HCT116 (cell line): ENCODE measurements at regions of chr13 and their contacts with region 1.

Region 1: DNA sequence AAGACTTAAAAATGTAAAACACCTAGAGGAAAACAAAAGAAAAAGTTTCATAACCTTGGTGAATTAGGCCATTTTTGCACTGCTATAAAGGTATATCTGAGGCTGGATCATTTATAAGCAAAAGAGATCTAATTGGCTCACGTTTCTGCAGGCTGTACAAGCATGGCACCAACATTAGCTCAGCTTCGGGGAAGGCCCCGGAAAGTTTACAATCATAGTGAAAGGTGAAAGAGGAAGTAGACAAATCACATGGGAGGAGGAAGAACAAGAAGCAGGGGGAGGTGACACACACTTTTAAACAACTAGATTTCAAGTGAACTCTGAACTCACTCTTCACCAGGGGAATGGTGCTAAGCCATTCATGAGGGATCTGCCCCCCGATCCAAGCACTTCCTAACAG is 1358.5 kb upstream of the PCDH9 start:
- DNase-seq: no peak
- ATAC-seq: no peak
- H3K4me3 ChIP-seq: no peak overlapping the region
- H3K27ac ChIP-seq: no peak overlapping the region
- H3K4me1 ChIP-seq: no peaks in the 10 kb centered on the region
- H3K27me3 ChIP-seq: no peaks in the 10 kb centered on the region
- CTCF ChIP-seq: no peak
- POLR2A ChIP-seq: no peak
- RAD21 ChIP-seq: no peak

Region 2: DNA sequence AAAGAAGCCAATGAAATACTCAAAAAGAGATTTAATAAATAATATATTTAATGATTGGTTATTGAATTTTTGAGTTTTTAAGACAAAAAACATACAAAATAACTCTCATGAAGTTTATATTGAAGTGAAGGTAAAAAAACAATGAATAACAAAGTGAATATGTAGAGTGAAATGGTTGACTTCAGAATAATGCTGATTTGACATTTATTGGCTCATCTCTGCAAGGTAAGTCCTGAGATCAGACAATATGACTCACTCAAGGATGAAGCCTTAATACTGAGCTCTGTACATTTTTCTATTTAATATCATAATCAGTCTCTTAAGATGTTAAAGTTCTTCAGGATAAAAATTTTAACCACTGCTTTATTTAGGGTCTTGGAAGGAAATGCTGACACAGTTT is 40.4 kb after region 1 on chr13:
- CTCF ChIA-PET with region 1: no interaction called
- POLR2A ChIA-PET with region 1: no interaction called
- RAD21 ChIA-PET with region 1: no interaction called
- intact Hi-C with region 1: loop called (anchors 1 kb)
- DNase-seq: no peak
- ATAC-seq: no peak
- H3K4me3 ChIP-seq: no peak overlapping the region
- H3K27ac ChIP-seq: no peak overlapping the region
- H3K4me1 ChIP-seq: no peaks in the 10 kb centered on the region
- H3K27me3 ChIP-seq: no peaks in the 10 kb centered on the region
- CTCF ChIP-seq: no peak
- POLR2A ChIP-seq: no peak
- RAD21 ChIP-seq: no peak

Region 3: GRCh38 chr13:68888831-68889230 is 300.2 kb after region 1 on chr13:
- CTCF ChIA-PET with region 1: no interaction called
- POLR2A ChIA-PET with region 1: no interaction called
- RAD21 ChIA-PET with region 1: no interaction called
- intact Hi-C with region 1: no loop called
- DNase-seq: peak; percentile 10
- ATAC-seq: no peak
- H3K4me3 ChIP-seq: no peak overlapping the region
- H3K27ac ChIP-seq: no peak overlapping the region
- H3K4me1 ChIP-seq: peaks cover 0 to 4% of the 10 kb centered on the region in 2 experiments; a peak in 1 of 4 replicates
- H3K27me3 ChIP-seq: no peaks in the 10 kb centered on the region
- CTCF ChIP-seq: no peak
- POLR2A ChIP-seq: no peak
- RAD21 ChIP-seq: no peak